CD8-positive, alpha-beta T cell (primary cell): ENCODE measurements at regions of chr10 and their contacts with region 1.

Region 1: GRCh38 chr10:22436884-22437619 is 91.8 kb downstream of the SPAG6 start:
- DNase-seq: peak; percentile 84 to 96 (median 90)
- ATAC-seq: peak; percentile 86
- H3K4me3 ChIP-seq: peak overlapping the region; percentile 88 to 93
- H3K4me3 Mint-ChIP-seq: peak overlapping the region; percentile 96
- H3K27ac ChIP-seq: peak overlapping the region; percentile 93 to 94
- H3K27ac Mint-ChIP-seq: peak overlapping the region; percentile 98
- H3K4me1 ChIP-seq: peaks cover 20% of the 10 kb centered on the region
- H3K4me1 Mint-ChIP-seq: peaks cover 29% of the 10 kb centered on the region
- H3K27me3 ChIP-seq: no peaks in the 10 kb centered on the region
- H3K27me3 Mint-ChIP-seq: no peaks in the 10 kb centered on the region
- CTCF ChIP-seq: no peak

Region 2: DNA sequence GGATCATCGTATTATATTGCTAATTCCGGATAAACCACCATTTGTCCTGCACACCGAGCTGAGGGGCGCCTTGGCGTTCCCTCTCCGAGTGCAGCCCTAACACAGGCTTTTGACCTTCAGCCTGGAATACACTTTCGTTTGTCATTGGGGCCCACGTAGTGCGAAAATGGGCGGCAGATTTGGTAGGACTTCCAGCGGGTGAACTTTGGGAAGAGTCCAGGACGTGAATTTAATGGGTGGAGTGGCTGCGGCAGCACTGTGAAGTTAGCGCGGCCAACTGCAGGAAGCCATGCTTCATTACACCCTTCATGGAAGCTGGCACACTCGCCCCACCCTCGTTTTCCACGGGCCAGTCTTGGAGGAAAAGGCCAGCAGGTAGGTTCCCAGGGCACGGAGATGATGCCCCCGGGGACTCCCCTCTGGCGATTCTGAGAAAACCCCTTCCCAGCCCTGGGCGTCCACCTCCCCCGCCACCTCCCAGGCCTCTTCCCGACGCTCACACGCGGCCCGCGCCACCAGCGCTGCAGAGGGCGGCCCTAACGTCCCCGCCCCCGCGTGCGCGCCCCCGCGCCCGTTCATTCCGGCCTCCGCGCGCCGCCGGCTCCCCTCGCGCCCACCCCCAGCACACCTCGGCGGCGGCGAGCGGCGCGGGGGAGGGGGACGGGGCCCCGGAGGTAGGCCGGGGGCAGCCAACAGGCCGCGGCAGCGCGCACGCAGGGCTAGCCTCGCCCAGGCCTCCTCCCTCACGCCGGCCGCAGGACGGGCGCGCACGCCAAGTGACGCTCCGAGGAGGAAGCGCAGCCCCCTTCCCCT is 903.4 kb before region 1 on chr10 and contains the start of gene MLLT10:
- CTCF ChIA-PET with region 1: no interaction called
- POLR2A ChIA-PET with region 1: interaction called, 3 read pairs
- intact Hi-C with region 1: loop called (anchors 5 kb)
- DNase-seq: peak; percentile 83 to 98 (median 92)
- ATAC-seq: peak; percentile 84
- H3K4me3 ChIP-seq: peak within 1 kb of the TSS; percentile 69 to 81
- H3K4me3 Mint-ChIP-seq: peak within 1 kb of the TSS; percentile 96
- H3K27ac ChIP-seq: peak within 1 kb of the TSS; percentile 64 to 75
- H3K27ac Mint-ChIP-seq: peak within 1 kb of the TSS; percentile 94
- H3K4me1 ChIP-seq: peaks cover 16% of the 10 kb centered on the region
- H3K4me1 Mint-ChIP-seq: peaks cover 29% of the 10 kb centered on the region
- H3K27me3 ChIP-seq: no peaks in the 10 kb centered on the region
- H3K27me3 Mint-ChIP-seq: no peaks in the 10 kb centered on the region
- CTCF ChIP-seq: peak; percentile 22
- total RNA-seq, gene MLLT10: 36.7 to 41.0 TPM

Region 3: DNA sequence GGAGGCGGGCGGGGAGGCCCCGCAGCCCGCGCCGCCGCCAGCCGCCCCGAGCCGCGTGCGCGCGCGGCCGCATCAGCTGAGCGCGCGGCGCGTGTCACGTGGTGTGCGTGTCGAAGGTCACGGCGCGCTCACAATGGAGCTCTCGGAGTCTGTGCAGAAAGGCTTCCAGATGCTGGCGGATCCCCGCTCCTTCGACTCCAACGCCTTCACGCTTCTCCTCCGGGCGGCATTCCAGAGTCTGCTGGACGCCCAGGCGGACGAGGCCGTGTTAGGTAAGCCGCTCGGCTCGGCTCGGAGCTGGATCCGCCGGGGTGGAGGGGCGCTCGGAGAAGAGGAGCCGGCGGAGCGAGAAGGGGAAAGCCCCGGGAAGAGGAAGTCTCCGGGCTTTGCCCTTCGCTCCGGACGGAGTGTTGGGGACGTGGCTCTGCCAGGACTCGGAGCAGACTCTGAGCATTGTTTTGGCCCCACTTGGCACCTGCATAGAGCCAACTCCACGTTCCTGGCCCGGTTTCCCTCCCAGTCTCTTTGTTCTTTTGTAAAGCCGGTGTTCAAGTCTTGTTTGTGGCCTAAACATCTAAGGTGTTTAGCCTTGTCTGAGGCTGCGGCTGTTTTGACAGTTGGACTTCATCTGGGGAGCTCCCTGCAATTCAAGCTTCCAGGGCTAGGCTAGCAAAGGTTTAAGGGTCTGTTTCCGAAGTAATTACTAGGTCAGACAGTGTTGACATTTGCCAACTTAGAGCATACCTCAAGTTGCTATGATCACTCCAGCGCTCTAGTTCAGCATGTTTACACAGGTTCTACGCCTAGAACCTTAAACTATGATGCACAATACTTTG is 120.5 kb before region 1 on chr10 and contains the start of gene COMMD3:
- CTCF ChIA-PET with region 1: no interaction called
- POLR2A ChIA-PET with region 1: interaction called, 39 read pairs
- intact Hi-C with region 1: loop called (anchors 1 to 5 kb)
- DNase-seq: peak; percentile 58 to 93 (median 80)
- ATAC-seq: peak; percentile 54
- H3K4me3 ChIP-seq: peak within 1 kb of the TSS; percentile 83 to 86
- H3K4me3 Mint-ChIP-seq: peak within 1 kb of the TSS; percentile 91
- H3K27ac ChIP-seq: peak within 1 kb of the TSS; percentile 82 to 87
- H3K27ac Mint-ChIP-seq: peak within 1 kb of the TSS; percentile 95
- H3K4me1 ChIP-seq: peaks cover 27% of the 10 kb centered on the region
- H3K4me1 Mint-ChIP-seq: peaks cover 31% of the 10 kb centered on the region
- H3K27me3 ChIP-seq: peaks cover 7 to 15% of the 10 kb centered on the region in 2 experiments
- H3K27me3 Mint-ChIP-seq: peaks cover 14% of the 10 kb centered on the region
- CTCF ChIP-seq: no peak
- total RNA-seq, gene COMMD3: 19.2 to 22.1 TPM

Region 4: DNA sequence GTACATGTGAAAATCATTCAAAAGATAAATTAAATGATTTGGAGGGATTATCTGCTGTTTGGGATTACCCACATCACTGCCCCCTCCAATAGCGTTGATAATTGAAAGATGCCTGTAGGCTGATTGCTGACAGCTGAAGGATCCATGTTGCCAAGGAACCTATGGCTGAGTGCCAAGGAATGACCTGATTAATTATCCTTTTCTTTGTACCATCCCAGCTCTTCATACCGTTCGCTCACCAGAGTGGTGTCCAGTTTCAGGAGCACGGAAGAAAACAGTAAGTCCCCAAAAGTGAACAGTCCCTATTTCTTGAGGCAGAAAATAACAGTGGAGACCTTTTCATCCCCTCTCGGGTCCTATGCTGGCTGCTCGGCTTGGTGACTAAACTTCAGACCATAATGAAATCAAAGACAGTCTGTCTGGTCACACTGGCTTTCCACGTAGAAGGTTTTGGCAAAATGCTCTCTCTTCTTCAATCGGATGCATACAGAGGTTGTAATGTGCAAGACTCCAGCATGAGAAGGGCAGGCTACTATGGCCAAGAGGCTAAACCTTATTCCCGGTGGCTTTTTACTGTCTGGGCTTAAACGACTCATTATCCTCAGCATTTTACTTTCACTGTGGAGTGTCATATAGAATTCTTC is 17.0 kb after region 1 on chr10:
- CTCF ChIA-PET with region 1: interaction called, 3 read pairs
- POLR2A ChIA-PET with region 1: interaction called, 10 read pairs
- intact Hi-C with region 1: no loop called
- DNase-seq: no peak
- ATAC-seq: no peak
- H3K4me3 ChIP-seq: no peak overlapping the region
- H3K4me3 Mint-ChIP-seq: no peak overlapping the region
- H3K27ac ChIP-seq: no peak overlapping the region
- H3K27ac Mint-ChIP-seq: no peak overlapping the region
- H3K4me1 ChIP-seq: no peaks in the 10 kb centered on the region
- H3K4me1 Mint-ChIP-seq: peaks cover 2% of the 10 kb centered on the region
- H3K27me3 ChIP-seq: no peaks in the 10 kb centered on the region
- H3K27me3 Mint-ChIP-seq: peaks cover 15% of the 10 kb centered on the region
- CTCF ChIP-seq: no peak

Region 5: GRCh38 chr10:22666287-22667092 is 229.4 kb after region 1 on chr10:
- CTCF ChIA-PET with region 1: no interaction called
- POLR2A ChIA-PET with region 1: no interaction called
- intact Hi-C with region 1: loop called in 1 of 2 experiments (anchors 5 kb)
- DNase-seq: peak; percentile 30 to 92 (median 67)
- ATAC-seq: peak; percentile 84
- H3K4me3 ChIP-seq: peak overlapping the region; percentile 29 to 42
- H3K4me3 Mint-ChIP-seq: peak overlapping the region; percentile 79
- H3K27ac ChIP-seq: peak overlapping the region; percentile 41 to 67
- H3K27ac Mint-ChIP-seq: peak overlapping the region; percentile 90
- H3K4me1 ChIP-seq: peaks cover 87% of the 10 kb centered on the region
- H3K4me1 Mint-ChIP-seq: peaks cover 83% of the 10 kb centered on the region
- H3K27me3 ChIP-seq: no peaks in the 10 kb centered on the region
- H3K27me3 Mint-ChIP-seq: no peaks in the 10 kb centered on the region
- CTCF ChIP-seq: no peak

Region 6: DNA sequence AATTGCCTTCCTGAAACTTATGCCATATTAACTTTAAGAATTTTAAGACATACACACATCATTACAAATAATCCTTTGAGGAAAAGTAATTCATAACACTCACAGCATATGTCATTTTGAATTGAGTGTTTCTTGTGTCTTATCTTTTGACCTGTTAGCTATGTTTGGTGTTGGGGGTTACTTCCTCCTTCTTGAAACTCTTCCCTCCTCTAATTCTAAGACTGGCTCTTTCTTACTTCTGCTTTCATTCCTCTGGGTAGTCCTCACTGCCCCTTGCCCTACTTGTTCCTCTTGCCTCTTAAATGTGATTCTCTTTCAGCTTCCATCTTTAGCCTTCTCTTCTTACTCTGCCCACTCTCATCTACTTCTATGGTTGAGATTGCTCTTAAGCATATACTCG is 305.6 kb after region 1 on chr10:
- CTCF ChIA-PET with region 1: no interaction called
- POLR2A ChIA-PET with region 1: no interaction called
- intact Hi-C with region 1: no loop called
- DNase-seq: no peak
- ATAC-seq: no peak
- H3K4me3 ChIP-seq: no peak overlapping the region
- H3K4me3 Mint-ChIP-seq: no peak overlapping the region
- H3K27ac ChIP-seq: no peak overlapping the region
- H3K27ac Mint-ChIP-seq: no peak overlapping the region
- H3K4me1 ChIP-seq: no peaks in the 10 kb centered on the region
- H3K4me1 Mint-ChIP-seq: peaks cover 2% of the 10 kb centered on the region
- H3K27me3 ChIP-seq: no peaks in the 10 kb centered on the region
- H3K27me3 Mint-ChIP-seq: no peaks in the 10 kb centered on the region
- CTCF ChIP-seq: no peak

Region 7: DNA sequence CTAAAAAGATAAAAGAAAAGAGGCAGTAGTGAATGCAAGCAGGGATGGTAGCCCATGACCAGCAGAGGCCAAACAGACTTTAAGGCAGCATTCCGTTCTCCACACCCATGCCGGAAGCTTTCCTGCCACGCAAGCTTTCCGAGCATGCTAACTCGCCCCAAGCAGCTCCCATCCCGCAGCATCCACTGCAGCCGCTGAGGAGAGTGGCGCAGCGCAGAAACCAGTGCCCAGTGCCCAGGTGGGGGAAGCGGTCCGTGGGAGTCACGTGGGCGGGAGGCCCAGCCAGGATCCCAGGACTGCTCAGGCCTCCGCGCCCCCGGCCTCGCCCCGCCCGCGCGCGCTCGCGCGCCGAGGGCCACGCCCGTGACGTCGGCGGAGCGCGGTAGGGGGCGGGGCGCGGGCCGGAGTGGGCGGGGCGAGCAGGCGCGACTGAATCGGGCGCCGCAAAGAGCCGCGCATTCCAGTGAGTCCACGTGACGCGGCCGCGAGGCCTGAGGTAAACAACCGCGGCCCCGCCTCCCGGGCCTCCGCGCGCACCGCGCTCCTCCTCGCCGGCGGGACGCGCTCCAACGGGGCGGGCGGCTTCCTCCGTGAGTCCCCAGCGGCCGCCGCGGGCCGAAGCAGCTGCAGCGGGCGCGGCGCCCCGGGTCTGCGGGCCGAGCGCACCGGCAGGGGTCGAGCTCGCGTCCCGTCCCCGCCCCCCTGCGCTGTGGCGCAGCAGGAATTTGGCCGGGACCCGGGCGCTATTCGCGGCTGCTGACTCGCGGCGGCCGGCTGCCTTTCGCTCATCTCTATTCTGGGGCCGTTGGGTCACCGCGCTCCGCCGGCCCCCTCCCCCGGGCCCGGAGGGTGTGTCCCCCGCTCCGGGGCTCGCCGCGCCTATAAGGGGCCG is 1001.7 kb after region 1 on chr10 and contains the start of gene OTUD1:
- CTCF ChIA-PET with region 1: no interaction called
- POLR2A ChIA-PET with region 1: no interaction called
- intact Hi-C with region 1: loop called in 1 of 2 experiments (anchors 10 kb)
- DNase-seq: peak; percentile 87 to 96 (median 93)
- ATAC-seq: peak; percentile 89
- H3K4me3 ChIP-seq: peak within 1 kb of the TSS; percentile 68 to 77
- H3K4me3 Mint-ChIP-seq: peak within 1 kb of the TSS; percentile 93
- H3K27ac ChIP-seq: peak within 1 kb of the TSS; percentile 82 to 90
- H3K27ac Mint-ChIP-seq: peak within 1 kb of the TSS; percentile 91
- H3K4me1 ChIP-seq: peaks cover 32% of the 10 kb centered on the region
- H3K4me1 Mint-ChIP-seq: peaks cover 37% of the 10 kb centered on the region
- H3K27me3 ChIP-seq: no peaks in the 10 kb centered on the region
- H3K27me3 Mint-ChIP-seq: no peaks in the 10 kb centered on the region
- CTCF ChIP-seq: no peak
- total RNA-seq, gene OTUD1: 78.9 to 81.3 TPM

Region 8: GRCh38 chr10:23556727-23557440 is 1119.8 kb after region 1 on chr10:
- CTCF ChIA-PET with region 1: no interaction called
- POLR2A ChIA-PET with region 1: no interaction called
- intact Hi-C with region 1: no loop called
- DNase-seq: no peak
- ATAC-seq: no peak
- H3K4me3 ChIP-seq: no peak overlapping the region
- H3K4me3 Mint-ChIP-seq: no peak overlapping the region
- H3K27ac ChIP-seq: no peak overlapping the region
- H3K27ac Mint-ChIP-seq: peak overlapping the region; percentile 53
- H3K4me1 ChIP-seq: no peaks in the 10 kb centered on the region
- H3K4me1 Mint-ChIP-seq: no peaks in the 10 kb centered on the region
- H3K27me3 ChIP-seq: no peaks in the 10 kb centered on the region
- H3K27me3 Mint-ChIP-seq: no peaks in the 10 kb centered on the region
- CTCF ChIP-seq: no peak